ENCODE measurements at regions of chr2 and their contacts with region 1.

Region 1: DNA sequence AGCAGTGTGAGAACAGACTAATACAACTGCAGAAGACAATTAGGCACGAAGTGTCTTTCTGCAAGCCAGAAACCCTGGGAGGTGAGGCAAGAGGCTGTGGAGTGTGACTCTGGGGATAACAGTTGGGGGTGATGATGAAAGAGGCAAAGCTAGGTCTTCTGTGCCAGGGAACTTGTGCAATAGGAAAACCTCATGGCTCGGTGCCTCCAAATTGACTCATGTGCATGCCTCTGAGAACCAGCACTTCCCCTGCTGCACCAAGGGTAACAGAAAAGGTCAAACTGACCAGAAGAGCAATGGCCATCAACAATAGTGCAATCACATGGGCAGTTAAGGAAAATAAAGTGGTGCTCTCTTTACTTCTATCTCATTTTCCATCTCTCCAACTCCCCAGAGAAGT is 136.4 kb downstream of the SCG2 start:
- DNase-seq: peak; percentile 49 to 65
- ATAC-seq: peak; percentile 48 to 95 (median 83)
- H3K4me3 ChIP-seq: no peak overlapping the region
- H3K27ac ChIP-seq: peak overlapping the region in 1 of 10 donors; percentile 41
- H3K4me1 ChIP-seq: peaks cover 0 to 49% (median 4%) of the 10 kb centered on the region in 9 donors
- H3K27me3 ChIP-seq: no peaks in the 10 kb centered on the region
- CTCF ChIP-seq: no peak

Region 2: GRCh38 chr2:221573430-221574230 is 1892.2 kb before region 1 on chr2:
- intact Hi-C with region 1: no loop called
- DNase-seq: peak; percentile 84 to 90
- ATAC-seq: peak; percentile 80 to 87 (median 82)
- H3K4me3 ChIP-seq: peak overlapping the region; percentile 59 to 92 (median 78)
- H3K27ac ChIP-seq: peak overlapping the region; percentile 55 to 95 (median 90)
- H3K4me1 ChIP-seq: peaks cover 0 to 41% (median 20%) of the 10 kb centered on the region in 9 donors
- H3K27me3 ChIP-seq: peaks cover 0 to 97% (median 14%) of the 10 kb centered on the region in 7 donors
- CTCF ChIP-seq: peak; percentile 95 to 99 (median 97)

Region 3: GRCh38 chr2:223383315-223383714 is 82.5 kb before region 1 on chr2:
- intact Hi-C with region 1: no loop called
- DNase-seq: no peak
- ATAC-seq: no peak
- H3K4me3 ChIP-seq: no peak overlapping the region
- H3K27ac ChIP-seq: no peak overlapping the region
- H3K4me1 ChIP-seq: no peaks in the 10 kb centered on the region
- H3K27me3 ChIP-seq: no peaks in the 10 kb centered on the region
- CTCF ChIP-seq: no peak

Region 4: DNA sequence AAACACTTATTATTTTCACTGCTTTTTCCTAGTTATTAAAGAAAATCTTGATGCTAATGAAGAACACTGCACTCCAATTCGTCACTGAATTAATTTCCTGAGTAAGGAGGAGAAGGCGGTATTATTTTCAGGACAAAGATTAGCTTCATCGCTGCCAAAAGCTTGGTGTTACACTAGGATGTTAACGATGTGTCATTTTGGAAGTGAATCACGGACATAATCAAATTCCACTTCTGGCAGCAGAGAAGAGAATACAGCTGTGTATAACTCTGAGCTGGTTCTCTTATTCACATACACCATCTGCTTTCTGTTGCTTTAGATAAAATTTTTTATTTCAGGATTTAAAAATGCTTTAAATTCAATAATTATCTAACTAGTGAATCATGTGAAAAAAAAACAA is 62.2 kb after region 1 on chr2:
- intact Hi-C with region 1: no loop called
- DNase-seq: no peak
- ATAC-seq: no peak
- H3K4me3 ChIP-seq: no peak overlapping the region
- H3K27ac ChIP-seq: no peak overlapping the region
- H3K4me1 ChIP-seq: peaks cover 0 to 8% (median 0%) of the 10 kb centered on the region in 9 donors
- H3K27me3 ChIP-seq: no peaks in the 10 kb centered on the region
- CTCF ChIP-seq: no peak

Region 5: GRCh38 chr2:223598994-223599639 is 133.3 kb after region 1 on chr2:
- intact Hi-C with region 1: loop called in 1 of 10 experiments (anchors 10 kb)
- DNase-seq: no peak
- ATAC-seq: no peak
- H3K4me3 ChIP-seq: no peak overlapping the region
- H3K27ac ChIP-seq: peak overlapping the region in 1 of 10 donors; percentile 57
- H3K4me1 ChIP-seq: peaks cover 0 to 12% (median 0%) of the 10 kb centered on the region in 9 donors
- H3K27me3 ChIP-seq: peaks cover 0 to 4% (median 0%) of the 10 kb centered on the region in 7 donors
- CTCF ChIP-seq: no peak

Region 6: DNA sequence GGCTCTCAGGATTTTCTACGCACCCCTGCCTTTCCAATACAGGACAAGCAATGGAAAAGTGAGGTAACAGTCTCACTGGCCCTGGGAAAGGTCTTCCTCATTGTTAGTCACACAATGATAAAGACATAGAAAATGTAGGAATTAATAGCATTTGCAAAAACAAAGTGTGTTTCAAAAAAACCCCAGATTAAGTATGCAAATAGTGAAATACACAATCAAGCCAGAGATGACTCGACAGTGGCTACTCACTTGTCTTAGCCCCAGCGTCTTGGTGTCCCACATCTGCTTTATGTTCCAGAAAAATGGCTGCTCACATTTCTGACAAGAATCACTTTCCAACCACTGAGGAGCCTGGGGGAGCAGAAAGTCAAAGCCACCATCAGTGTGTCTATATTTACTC is 418.6 kb after region 1 on chr2:
- intact Hi-C with region 1: no loop called
- DNase-seq: no peak
- ATAC-seq: no peak
- H3K4me3 ChIP-seq: no peak overlapping the region
- H3K27ac ChIP-seq: no peak overlapping the region
- H3K4me1 ChIP-seq: peaks cover 0 to 6% (median 0%) of the 10 kb centered on the region in 9 donors
- H3K27me3 ChIP-seq: no peaks in the 10 kb centered on the region
- CTCF ChIP-seq: no peak

Measured in heart right ventricle (tissue), 16 donors.